Right ventricle myocardium superior (tissue), 1 donor: ENCODE measurements at regions of chr10 and their contacts with region 1.

Region 1: GRCh38 chr10:101889256-101890210 is 45.9 kb upstream of the KCNIP2 start:
- DNase-seq: peak; percentile 81
- ATAC-seq: peak; percentile 47

Region 2: DNA sequence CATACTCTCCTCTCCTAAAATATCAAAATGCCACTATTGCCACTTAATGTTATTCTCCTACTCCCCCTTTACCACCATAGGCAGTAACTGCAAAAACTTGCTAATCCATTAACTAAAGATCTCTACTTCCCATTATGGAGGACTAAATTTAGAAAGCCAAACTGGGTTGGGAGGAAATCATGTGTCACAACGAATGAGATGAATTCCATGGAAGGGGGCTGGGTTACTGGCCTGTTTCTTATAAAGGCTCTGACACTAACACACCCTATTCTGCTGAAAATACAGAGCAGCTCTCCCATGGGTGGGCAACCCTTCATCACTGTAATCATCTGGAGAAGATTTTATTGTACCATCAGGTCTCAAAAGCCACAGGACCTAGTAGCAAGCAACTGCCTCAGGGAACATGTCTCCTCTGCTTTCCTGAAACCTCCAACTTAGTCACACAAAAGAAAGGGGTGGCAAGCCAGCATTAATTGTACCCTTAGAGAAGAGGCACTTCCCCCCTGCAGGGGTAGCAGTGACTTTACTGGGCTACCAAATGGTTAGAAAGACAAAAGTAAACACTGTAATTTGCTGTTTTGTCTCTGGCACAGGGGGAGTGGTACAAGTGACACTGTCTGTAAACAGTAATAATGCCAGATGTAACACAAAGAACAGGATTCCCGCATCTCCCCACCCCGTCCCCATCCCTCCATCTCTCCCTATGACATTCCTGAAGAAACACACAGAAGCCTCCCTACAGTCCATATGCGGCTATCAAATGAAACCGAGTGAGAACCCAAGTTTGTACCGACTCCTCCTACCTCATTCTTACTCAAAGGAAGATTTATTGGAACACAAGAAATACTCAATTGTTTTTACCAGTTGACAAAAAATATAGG is 84.8 kb after region 1 on chr10:
- intact Hi-C with region 1: loop called (anchors 10 kb)
- DNase-seq: no peak
- ATAC-seq: peak; percentile 49

Region 3: GRCh38 chr10:101995451-101996063 is 106.0 kb after region 1 on chr10:
- intact Hi-C with region 1: no loop called
- DNase-seq: no peak
- ATAC-seq: no peak

Region 4: GRCh38 chr10:102009801-102010425 is 120.4 kb after region 1 on chr10:
- intact Hi-C with region 1: loop called (anchors 5 kb)
- DNase-seq: no peak
- ATAC-seq: peak; percentile 92